ENCODE measurements at regions of chr16 and their contacts with region 1.

Region 1: GRCh38 chr16:23728112-23728477 is 15.1 kb upstream of the ERN2 start:
- DNase-seq: no peak
- ATAC-seq: peak; percentile 52; a peak in 4 of 6 replicates
- H3K4me3 ChIP-seq: no peak overlapping the region
- H3K27ac ChIP-seq: no peak overlapping the region
- H3K4me1 ChIP-seq: no peaks in the 10 kb centered on the region
- CTCF ChIP-seq: no peak; the same call in none of the 3 replicates
- EP300 ChIP-seq: no peak
- POLR2A ChIP-seq: no peak
- RAD21 ChIP-seq: no peak

Region 2: GRCh38 chr16:23678430-23679273 is 49.4 kb before region 1 on chr16 and contains the start of gene PLK1:
- CTCF ChIA-PET with region 1: interaction called, 27 read pairs
- POLR2A ChIA-PET with region 1: interaction called, 3 read pairs
- DNase-seq: peak; percentile 88 to 96
- ATAC-seq: peak; percentile 94 to 97
- H3K4me3 ChIP-seq: peak within 1 kb of the TSS; percentile 78
- H3K27ac ChIP-seq: peak within 1 kb of the TSS; percentile 80 to 91
- H3K4me1 ChIP-seq: peaks cover 27% of the 10 kb centered on the region
- CTCF ChIP-seq: peak; percentile 42
- EP300 ChIP-seq: no peak
- POLR2A ChIP-seq: peak; percentile 33; the same call in 1 of the 2 replicates
- RAD21 ChIP-seq: peak; percentile 39 to 55
- polyA plus RNA-seq, gene PLK1: 52.8 and 71.9 TPM in 2 replicates

Region 3: DNA sequence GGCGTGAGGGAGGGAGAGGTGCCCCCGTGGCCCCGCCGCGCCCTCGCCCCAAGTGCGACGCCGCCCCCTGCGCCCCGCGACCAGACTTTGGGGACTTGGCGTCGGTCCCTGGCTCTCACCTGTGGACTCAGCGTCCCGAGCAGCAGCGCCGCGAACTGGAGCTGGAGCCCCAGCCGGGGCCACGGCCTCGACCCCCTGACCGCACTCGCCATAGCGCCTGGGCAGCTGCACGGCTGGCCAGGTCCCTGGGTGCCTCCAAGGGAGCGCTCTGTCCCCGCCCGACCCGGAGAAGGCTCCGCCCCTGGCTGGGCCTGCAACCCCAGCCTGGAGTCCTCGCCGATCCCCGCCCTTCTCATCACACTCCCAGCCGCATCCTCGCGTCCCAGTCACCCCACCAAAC is 15.1 kb before region 1 on chr16 and contains the start of gene ERN2:
- CTCF ChIA-PET with region 1: interaction called, 10 read pairs
- POLR2A ChIA-PET with region 1: no interaction called
- DNase-seq: no peak
- ATAC-seq: no peak
- H3K4me3 ChIP-seq: no peak within 1 kb of the TSS
- H3K27ac ChIP-seq: no peak within 1 kb of the TSS
- H3K4me1 ChIP-seq: no peaks in the 10 kb centered on the region
- CTCF ChIP-seq: no peak
- EP300 ChIP-seq: no peak
- POLR2A ChIP-seq: no peak
- RAD21 ChIP-seq: no peak
- polyA plus RNA-seq, gene ERN2: not detected in 2 replicates

Region 4: GRCh38 chr16:23924128-23924527 is 196.0 kb after region 1 on chr16:
- CTCF ChIA-PET with region 1: no interaction called
- POLR2A ChIA-PET with region 1: no interaction called
- DNase-seq: no peak
- ATAC-seq: no peak
- H3K4me3 ChIP-seq: no peak overlapping the region
- H3K27ac ChIP-seq: no peak overlapping the region
- H3K4me1 ChIP-seq: no peaks in the 10 kb centered on the region
- CTCF ChIP-seq: no peak
- EP300 ChIP-seq: no peak
- POLR2A ChIP-seq: no peak
- RAD21 ChIP-seq: no peak

Measured in A549 (cell line).